AG04449 (cell line): ENCODE measurements at regions of chr5 and their contacts with region 1.

Region 1: DNA sequence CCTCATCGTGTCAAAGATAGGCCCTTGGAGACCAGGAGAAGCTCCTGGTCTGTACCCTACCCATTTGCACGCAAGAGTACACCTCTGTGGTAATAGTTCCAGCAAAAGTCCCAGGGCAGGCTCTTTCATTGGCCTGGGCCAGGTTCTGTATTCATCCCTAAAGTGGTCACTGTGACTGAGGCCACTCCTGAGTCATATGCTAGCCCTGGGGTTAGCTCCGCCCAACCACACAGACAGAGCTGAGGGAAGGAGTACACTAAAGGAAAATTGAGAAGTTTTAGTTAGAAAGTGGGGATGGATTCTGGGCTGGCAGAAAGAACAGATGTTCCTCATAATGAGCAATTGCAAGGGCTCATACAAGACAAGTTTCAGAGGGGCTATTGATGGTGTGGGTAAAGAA is 206.7 kb downstream of the ARHGAP26 start:
- DNase-seq: no peak
- H3K4me3 ChIP-seq: no peak overlapping the region
- CTCF ChIP-seq: no peak

Region 2: DNA sequence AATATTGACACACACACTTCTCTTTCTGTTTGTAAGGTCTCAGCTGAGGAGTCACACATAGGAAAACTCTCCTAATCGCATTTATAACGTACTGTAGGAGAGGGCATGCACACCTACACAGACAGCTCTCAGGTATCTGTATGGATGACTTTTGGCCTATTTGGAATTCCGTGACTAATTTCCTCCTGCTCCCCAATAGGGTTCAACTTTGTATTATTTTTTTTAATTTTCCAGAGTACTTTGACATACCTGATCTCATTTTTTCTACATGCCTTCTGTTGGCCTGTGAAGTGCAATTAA is 10.8 kb before region 1 on chr5:
- CTCF ChIA-PET with region 1: interaction called, 12 read pairs
- POLR2A ChIA-PET with region 1: no interaction called
- DNase-seq: no peak
- H3K4me3 ChIP-seq: no peak overlapping the region
- CTCF ChIP-seq: no peak

Region 3: DNA sequence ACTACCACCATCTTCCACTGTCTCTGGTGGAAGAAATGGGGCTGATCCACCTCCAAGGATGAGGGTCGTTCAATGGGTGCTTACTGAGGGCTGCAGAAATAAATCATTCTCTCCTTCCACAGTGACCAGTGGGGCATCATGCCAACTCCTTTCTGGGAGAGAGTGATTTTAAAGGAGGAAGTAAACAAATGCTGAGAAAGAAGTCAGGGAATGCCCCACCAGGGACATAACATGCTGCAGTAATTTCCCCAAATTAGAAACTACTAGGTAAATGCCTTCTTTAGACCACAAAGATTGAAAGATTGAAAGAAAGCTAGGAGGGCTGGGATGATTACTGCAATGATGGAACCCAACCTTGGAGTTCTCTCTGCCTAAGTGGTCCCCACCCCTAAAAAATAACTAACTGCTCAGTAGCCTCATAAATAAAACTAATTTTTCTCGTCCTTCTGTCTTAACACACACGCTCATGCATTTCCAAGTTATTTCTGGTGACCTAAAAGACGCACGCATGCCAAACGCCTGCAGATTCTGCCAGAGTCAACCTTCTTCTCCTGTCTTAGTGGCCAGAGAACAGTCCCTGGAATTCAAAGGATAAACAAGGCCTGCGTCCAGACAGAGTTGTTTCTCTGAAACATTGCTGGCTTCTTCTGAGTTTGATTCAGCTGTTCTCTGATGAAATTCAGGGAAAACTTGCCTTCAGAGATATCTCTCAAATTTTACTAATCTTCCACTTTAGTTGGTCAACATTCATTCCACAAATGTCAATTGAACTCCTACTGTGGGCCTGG is 176.7 kb after region 1 on chr5:
- CTCF ChIA-PET with region 1: no interaction called
- POLR2A ChIA-PET with region 1: no interaction called
- DNase-seq: peak; percentile 83
- H3K4me3 ChIP-seq: no peak overlapping the region
- CTCF ChIP-seq: no peak